CD8-positive, alpha-beta T cell (primary cell): ENCODE measurements at regions of chr2 and their contacts with region 1.

Region 1: DNA sequence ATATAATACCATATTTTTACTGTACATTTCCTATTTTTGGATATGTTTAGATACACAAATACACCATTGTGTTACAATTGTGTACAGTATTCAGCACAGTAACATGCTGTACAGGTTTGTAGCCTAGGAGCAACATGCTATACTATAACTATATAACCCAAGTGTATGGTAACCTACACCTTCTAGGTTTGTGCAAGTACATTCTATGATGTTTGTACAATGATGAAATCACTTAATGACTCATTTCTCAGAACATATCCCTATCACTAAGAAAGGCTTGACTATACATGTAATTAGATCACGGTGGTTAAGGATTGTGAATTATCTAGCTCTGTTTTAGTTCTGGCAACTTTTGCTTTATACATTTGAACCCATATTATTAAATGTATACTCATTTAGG is 31.3 kb downstream of the NPHP1 start:
- DNase-seq: no peak
- ATAC-seq: no peak
- H3K4me3 ChIP-seq: no peak overlapping the region
- H3K4me3 Mint-ChIP-seq: no peak overlapping the region
- H3K27ac ChIP-seq: no peak overlapping the region
- H3K27ac Mint-ChIP-seq: no peak overlapping the region
- H3K4me1 ChIP-seq: no peaks in the 10 kb centered on the region
- H3K4me1 Mint-ChIP-seq: peaks cover 5% of the 10 kb centered on the region
- H3K27me3 ChIP-seq: no peaks in the 10 kb centered on the region
- H3K27me3 Mint-ChIP-seq: peaks cover 6% of the 10 kb centered on the region
- CTCF ChIP-seq: no peak

Region 2: GRCh38 chr2:110211938-110212858 is 38.7 kb after region 1 on chr2 and contains the start of gene MTLN:
- CTCF ChIA-PET with region 1: no interaction called
- POLR2A ChIA-PET with region 1: no interaction called
- intact Hi-C with region 1: loop called in 1 of 2 experiments (anchors 1 kb)
- DNase-seq: peak; percentile 37 to 86 (median 65)
- ATAC-seq: peak; percentile 94
- H3K4me3 ChIP-seq: peak within 1 kb of the TSS; percentile 81 to 89
- H3K4me3 Mint-ChIP-seq: peak within 1 kb of the TSS; percentile 90
- H3K27ac ChIP-seq: peak within 1 kb of the TSS; percentile 74 to 78
- H3K27ac Mint-ChIP-seq: peak within 1 kb of the TSS; percentile 96
- H3K4me1 ChIP-seq: peaks cover 3% of the 10 kb centered on the region
- H3K4me1 Mint-ChIP-seq: peaks cover 24% of the 10 kb centered on the region
- H3K27me3 ChIP-seq: peaks cover 0 to 3% of the 10 kb centered on the region in 2 experiments
- H3K27me3 Mint-ChIP-seq: peaks cover 22% of the 10 kb centered on the region
- CTCF ChIP-seq: no peak
- total RNA-seq, gene MTLN: 13.6 to 15.7 TPM